Aorta (tissue), 5 donors: ENCODE measurements at regions of chr1 and their contacts with region 1.

Region 1: GRCh38 chr1:23585447-23586015 is 26.2 kb upstream of the ID3 start:
- DNase-seq: no peak
- ATAC-seq: peak; percentile 50
- H3K4me3 ChIP-seq: no peak overlapping the region
- H3K27ac ChIP-seq: no peak overlapping the region
- H3K4me1 ChIP-seq: no peaks in the 10 kb centered on the region
- H3K27me3 ChIP-seq: no peaks in the 10 kb centered on the region

Region 2: DNA sequence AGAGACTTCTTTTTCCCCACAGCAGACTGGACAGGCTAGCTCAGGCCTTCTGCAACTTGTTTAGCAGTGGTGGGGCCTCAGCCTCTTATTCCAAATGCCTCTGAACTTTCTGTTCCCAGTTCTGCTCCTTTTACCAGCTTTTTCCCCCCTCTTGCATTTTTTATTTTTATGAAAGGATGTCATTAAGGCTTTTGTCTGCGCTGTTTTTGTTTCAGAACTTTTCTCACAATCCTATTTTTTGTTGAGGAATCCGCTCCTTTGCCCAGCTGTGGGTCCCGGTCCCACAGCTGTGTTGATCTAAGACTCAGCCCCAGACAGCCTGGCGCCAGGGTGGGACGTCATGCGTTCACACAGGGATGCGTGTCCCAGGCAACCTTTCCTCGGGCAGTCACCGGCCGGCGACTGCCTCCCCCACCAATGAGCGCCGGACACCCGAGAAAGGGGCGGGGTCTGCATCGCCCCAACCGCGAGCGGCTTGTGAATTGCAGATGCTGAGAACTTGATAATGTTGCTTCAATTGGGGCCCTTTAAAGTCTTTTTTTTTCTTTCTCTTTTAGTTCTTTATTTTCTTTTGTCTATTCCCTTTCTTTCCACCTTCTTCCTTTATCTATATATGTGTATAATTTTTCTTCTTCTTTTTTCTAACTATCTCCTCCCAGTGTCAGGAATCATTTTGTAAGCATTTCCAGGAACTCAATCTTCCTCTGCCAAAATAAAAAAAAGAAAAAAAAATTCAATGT is 23.2 kb before region 1 on chr1:
- intact Hi-C with region 1: no loop called
- DNase-seq: peak; percentile 98 to 99
- ATAC-seq: peak; percentile 89
- H3K4me3 ChIP-seq: no peak overlapping the region
- H3K27ac ChIP-seq: peak overlapping the region; percentile 84 to 100
- H3K4me1 ChIP-seq: peaks cover 0 to 5% of the 10 kb centered on the region in 2 donors
- H3K27me3 ChIP-seq: no peaks in the 10 kb centered on the region

Region 3: DNA sequence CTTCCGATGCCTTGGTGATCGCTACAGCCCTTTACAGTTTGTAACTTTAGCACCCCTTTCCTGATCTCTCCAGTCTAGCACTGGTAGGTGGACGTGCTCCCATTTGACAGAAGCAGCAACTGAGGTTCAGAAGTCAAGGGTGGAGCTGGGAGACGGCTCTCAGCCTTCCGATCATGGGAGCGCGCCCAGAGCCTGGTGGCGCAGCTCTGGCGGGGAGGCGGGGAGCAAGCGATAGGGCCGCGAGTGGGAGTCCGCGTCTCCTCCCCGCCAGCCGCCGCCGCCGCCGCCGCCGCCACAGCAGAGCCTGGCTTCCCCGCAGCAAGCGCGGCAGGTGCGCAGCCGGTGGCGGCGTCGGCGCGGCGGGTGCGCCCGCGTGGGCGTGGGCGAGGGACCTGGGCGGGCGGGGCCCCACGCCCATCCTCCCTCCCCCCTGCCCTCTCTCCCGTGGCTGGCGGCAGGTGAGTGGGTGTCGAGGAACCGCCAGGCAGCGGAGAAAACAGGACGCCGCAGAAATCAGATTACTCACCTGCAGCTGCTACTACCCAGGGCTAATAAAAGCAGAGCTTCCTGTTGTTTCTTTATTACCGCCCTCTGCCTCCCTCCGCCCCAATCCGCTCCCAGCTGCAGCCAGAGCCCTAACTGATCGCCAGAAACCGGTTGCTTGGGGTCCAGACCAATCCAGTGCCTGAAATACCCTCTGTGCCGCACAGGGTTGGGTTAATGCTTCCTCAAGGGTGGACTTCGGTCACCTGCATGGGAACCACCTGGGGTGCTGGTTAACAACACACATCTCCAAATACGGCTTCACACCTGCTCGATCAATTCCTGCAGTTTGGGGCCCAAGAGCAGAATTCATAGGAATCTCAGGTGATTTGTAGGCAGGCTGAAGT is 34.0 kb after region 1 on chr1:
- intact Hi-C with region 1: loop called in 1 of 2 experiments (anchors 5 kb)
- DNase-seq: no peak
- ATAC-seq: no peak
- H3K4me3 ChIP-seq: peak overlapping the region; percentile 12 to 44
- H3K27ac ChIP-seq: no peak overlapping the region
- H3K4me1 ChIP-seq: no peaks in the 10 kb centered on the region
- H3K27me3 ChIP-seq: no peaks in the 10 kb centered on the region

Region 4: DNA sequence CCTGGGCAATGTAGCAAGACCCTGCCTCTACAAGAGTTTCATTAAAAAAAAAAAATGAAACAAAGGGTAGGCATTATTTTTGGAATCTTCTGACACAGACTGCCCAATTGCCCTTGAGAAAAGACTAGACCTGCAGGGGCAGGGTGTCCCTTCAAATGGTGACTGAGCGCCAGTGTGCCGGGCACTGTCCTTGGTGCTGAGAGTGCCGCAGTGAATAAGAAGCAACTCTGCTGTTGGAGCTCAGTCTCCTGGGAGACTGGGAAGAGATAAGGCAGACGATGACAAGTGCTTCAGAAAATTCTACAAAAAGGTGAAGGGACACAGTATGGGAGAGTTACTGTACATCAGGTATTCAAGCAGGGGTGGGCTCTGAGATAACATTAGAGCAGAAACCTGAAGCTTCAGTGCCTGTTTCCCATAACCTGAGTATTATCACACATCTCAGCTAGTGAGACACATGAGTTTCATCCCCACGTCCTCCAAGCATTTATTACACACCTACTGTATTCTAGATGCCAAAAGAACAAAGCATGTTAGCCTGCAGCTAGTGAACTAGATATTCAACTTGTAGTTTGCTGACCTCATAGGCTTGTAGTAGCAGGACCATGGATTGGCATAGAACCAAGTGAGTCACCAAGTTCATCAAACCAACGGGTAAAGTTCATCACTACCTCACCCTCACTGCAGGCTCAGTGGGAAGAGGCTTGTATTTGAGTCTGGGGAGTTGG is 87.7 kb after region 1 on chr1:
- intact Hi-C with region 1: no loop called
- DNase-seq: no peak
- ATAC-seq: no peak
- H3K4me3 ChIP-seq: no peak overlapping the region
- H3K27ac ChIP-seq: no peak overlapping the region
- H3K4me1 ChIP-seq: no peaks in the 10 kb centered on the region
- H3K27me3 ChIP-seq: no peaks in the 10 kb centered on the region